IMR-90 (cell line): ENCODE measurements at regions of chr10 and their contacts with region 1.

Region 1: GRCh38 chr10:62244780-62245467 is 23.7 kb downstream of the RTKN2 start:
- DNase-seq: peak; percentile 83
- ATAC-seq: peak; percentile 63
- H3K4me3 ChIP-seq: no peak overlapping the region; the same call in 1 of the 2 replicates
- H3K27ac ChIP-seq: peak overlapping the region; percentile 92
- H3K4me1 ChIP-seq: peaks cover 6% of the 10 kb centered on the region
- H3K27me3 ChIP-seq: no peaks in the 10 kb centered on the region
- CTCF ChIP-seq: peak; percentile 88
- POLR2A ChIP-seq: no peak
- RAD21 ChIP-seq: peak; percentile 93

Region 2: GRCh38 chr10:61744469-61744868 is 500.5 kb before region 1 on chr10:
- CTCF ChIA-PET with region 1: no interaction called
- POLR2A ChIA-PET with region 1: no interaction called
- dilution Hi-C with region 1: no loop called
- in situ Hi-C with region 1: no loop called
- intact Hi-C with region 1: loop called (anchors 10 kb)
- DNase-seq: no peak
- ATAC-seq: no peak
- H3K4me3 ChIP-seq: no peak overlapping the region
- H3K27ac ChIP-seq: no peak overlapping the region
- H3K4me1 ChIP-seq: peaks cover 4% of the 10 kb centered on the region; the same call in 1 of the 2 replicates
- H3K27me3 ChIP-seq: no peaks in the 10 kb centered on the region
- CTCF ChIP-seq: no peak
- POLR2A ChIP-seq: no peak
- RAD21 ChIP-seq: no peak

Region 3: DNA sequence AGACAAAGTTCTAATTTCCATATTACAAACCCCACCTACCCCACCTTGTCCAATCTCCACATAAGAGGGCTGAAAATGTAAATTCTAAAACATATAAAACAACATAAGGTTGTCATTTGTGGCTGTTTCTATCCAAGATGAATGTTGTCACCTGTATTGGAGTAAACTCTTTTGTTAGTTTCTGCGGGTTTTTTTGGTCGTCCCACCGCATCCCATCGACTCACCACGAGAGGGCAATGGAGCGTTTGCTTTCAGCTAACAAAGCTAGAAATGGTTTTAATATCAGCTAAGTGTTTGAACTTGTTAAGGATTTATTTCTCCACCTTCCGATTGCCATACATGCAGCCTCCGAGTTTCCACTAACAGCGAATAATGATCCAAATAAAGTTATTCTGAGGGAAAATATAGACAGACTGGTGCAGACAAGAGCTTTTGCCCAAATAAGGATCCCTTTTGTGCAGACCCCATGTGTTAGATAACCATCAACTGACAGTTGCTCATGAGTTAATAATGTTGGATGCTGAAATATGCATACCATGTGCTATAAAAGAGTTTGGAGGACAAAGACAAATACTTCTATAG is 206.2 kb before region 1 on chr10:
- CTCF ChIA-PET with region 1: interaction called, 7 read pairs
- POLR2A ChIA-PET with region 1: no interaction called
- dilution Hi-C with region 1: no loop called
- in situ Hi-C with region 1: no loop called
- intact Hi-C with region 1: loop called (anchors 2 kb)
- DNase-seq: peak; percentile 78
- ATAC-seq: peak; percentile 33
- H3K4me3 ChIP-seq: no peak overlapping the region; the same call in 1 of the 2 replicates
- H3K27ac ChIP-seq: peak overlapping the region; percentile 96
- H3K4me1 ChIP-seq: peaks cover 28% of the 10 kb centered on the region
- H3K27me3 ChIP-seq: no peaks in the 10 kb centered on the region
- CTCF ChIP-seq: peak; percentile 84
- POLR2A ChIP-seq: 0 out of 2 replicates have a peak, but pooled peaks have one; percentile 23
- RAD21 ChIP-seq: peak; percentile 90

Region 4: GRCh38 chr10:62095181-62096071 is 149.5 kb before region 1 on chr10:
- CTCF ChIA-PET with region 1: interaction called, 7 read pairs
- POLR2A ChIA-PET with region 1: interaction called, 5 read pairs
- dilution Hi-C with region 1: no loop called
- in situ Hi-C with region 1: no loop called
- intact Hi-C with region 1: loop called (anchors 1 kb)
- DNase-seq: peak; percentile 69
- ATAC-seq: no peak
- H3K4me3 ChIP-seq: no peak overlapping the region
- H3K27ac ChIP-seq: peak overlapping the region; percentile 98; the same call in 1 of the 2 replicates
- H3K4me1 ChIP-seq: peaks cover 39% of the 10 kb centered on the region
- H3K27me3 ChIP-seq: no peaks in the 10 kb centered on the region
- CTCF ChIP-seq: no peak
- POLR2A ChIP-seq: no peak
- RAD21 ChIP-seq: no peak

Region 5: GRCh38 chr10:62323751-62324150 is 78.8 kb after region 1 on chr10:
- CTCF ChIA-PET with region 1: no interaction called
- POLR2A ChIA-PET with region 1: no interaction called
- dilution Hi-C with region 1: no loop called
- in situ Hi-C with region 1: no loop called
- intact Hi-C with region 1: no loop called
- DNase-seq: no peak
- ATAC-seq: no peak
- H3K4me3 ChIP-seq: no peak overlapping the region
- H3K27ac ChIP-seq: no peak overlapping the region
- H3K4me1 ChIP-seq: no peaks in the 10 kb centered on the region
- H3K27me3 ChIP-seq: no peaks in the 10 kb centered on the region
- CTCF ChIP-seq: no peak
- POLR2A ChIP-seq: no peak
- RAD21 ChIP-seq: no peak

Region 6: DNA sequence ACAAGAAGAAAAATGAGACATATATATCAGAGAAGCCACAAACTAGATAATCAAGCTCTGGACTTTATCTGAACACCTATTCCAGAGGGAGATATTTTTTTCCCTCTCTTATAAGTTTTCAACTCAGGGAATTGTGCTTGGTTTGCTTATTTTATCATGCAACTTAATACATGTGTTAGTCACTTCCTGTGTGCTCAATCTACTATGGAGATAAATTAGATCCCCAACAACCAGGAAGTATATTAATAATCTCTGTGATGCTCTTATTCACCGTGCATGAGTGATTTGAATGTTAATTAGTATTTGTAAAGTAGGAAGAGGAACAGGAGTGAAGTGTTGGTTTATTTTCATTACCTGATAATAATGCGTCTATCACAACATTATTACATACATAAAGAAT is 90.4 kb after region 1 on chr10:
- CTCF ChIA-PET with region 1: no interaction called
- POLR2A ChIA-PET with region 1: no interaction called
- dilution Hi-C with region 1: no loop called
- in situ Hi-C with region 1: no loop called
- intact Hi-C with region 1: no loop called
- DNase-seq: peak; percentile 50
- ATAC-seq: 0 out of 2 replicates have a peak, but pooled peaks have one; percentile 17
- H3K4me3 ChIP-seq: no peak overlapping the region
- H3K27ac ChIP-seq: no peak overlapping the region
- H3K4me1 ChIP-seq: no peaks in the 10 kb centered on the region
- H3K27me3 ChIP-seq: no peaks in the 10 kb centered on the region
- CTCF ChIP-seq: no peak
- POLR2A ChIP-seq: no peak
- RAD21 ChIP-seq: no peak